Heart right ventricle (tissue), 16 donors: ENCODE measurements at regions of chr9 and their contacts with region 1.

Region 1: GRCh38 chr9:21802195-21803000 is at the start of gene MTAP:
- DNase-seq: peak; percentile 90 to 94
- ATAC-seq: peak; percentile 97 to 99 (median 98)
- H3K4me3 ChIP-seq: peak within 1 kb of the TSS; percentile 54 to 94 (median 80)
- H3K27ac ChIP-seq: peak within 1 kb of the TSS; percentile 67 to 94 (median 89)
- H3K4me1 ChIP-seq: peaks cover 0 to 45% (median 26%) of the 10 kb centered on the region in 9 donors
- H3K27me3 ChIP-seq: peaks cover 0 to 16% (median 4%) of the 10 kb centered on the region in 7 donors
- CTCF ChIP-seq: no peak
- total RNA-seq, gene MTAP: 14.7 to 26.2 (median 21.4) TPM

Region 2: GRCh38 chr9:21334701-21335632 is 467.4 kb before region 1 on chr9 and contains the start of gene KLHL9:
- intact Hi-C with region 1: loop called in 3 of 10 experiments (anchors 5 kb)
- DNase-seq: peak; percentile 94 to 95
- ATAC-seq: peak; percentile 99 to 100 (median 100)
- H3K4me3 ChIP-seq: peak within 1 kb of the TSS; percentile 77 to 96 (median 84)
- H3K27ac ChIP-seq: peak within 1 kb of the TSS; percentile 63 to 99 (median 95)
- H3K4me1 ChIP-seq: peaks cover 6 to 51% (median 45%) of the 10 kb centered on the region in 9 donors
- H3K27me3 ChIP-seq: no peaks in the 10 kb centered on the region
- CTCF ChIP-seq: no peak
- total RNA-seq, gene KLHL9: 10.8 to 14.3 (median 11.9) TPM

Region 3: GRCh38 chr9:21995177-21996086 is 193.0 kb after region 1 on chr9:
- intact Hi-C with region 1: loop called in 1 of 10 experiments (anchors 10 kb)
- DNase-seq: peak; percentile 65 to 69
- ATAC-seq: peak; percentile 78 to 93 (median 88)
- H3K4me3 ChIP-seq: peak overlapping the region; percentile 54 to 98 (median 89)
- H3K27ac ChIP-seq: peak overlapping the region in 9 of 10 donors; percentile 59 to 98 (median 75)
- H3K4me1 ChIP-seq: peaks cover 0 to 19% (median 5%) of the 10 kb centered on the region in 9 donors
- H3K27me3 ChIP-seq: peaks cover 0 to 52% (median 38%) of the 10 kb centered on the region in 7 donors
- CTCF ChIP-seq: peak in 4 of 9 donors; percentile 29 to 50 (median 43)

Region 4: GRCh38 chr9:22238809-22239684 is 436.6 kb after region 1 on chr9:
- intact Hi-C with region 1: loop called in 1 of 10 experiments (anchors 10 kb)
- DNase-seq: no peak
- ATAC-seq: peak in 1 of 8 donors; percentile 46
- H3K4me3 ChIP-seq: no peak overlapping the region
- H3K27ac ChIP-seq: no peak overlapping the region
- H3K4me1 ChIP-seq: peaks cover 0 to 27% (median 0%) of the 10 kb centered on the region in 9 donors
- H3K27me3 ChIP-seq: no peaks in the 10 kb centered on the region
- CTCF ChIP-seq: peak in 8 of 9 donors; percentile 16 to 66 (median 56)